ENCODE measurements at regions of chr1 and their contacts with region 1.

Region 1: GRCh38 chr1:7983086-7983778 is 21.7 kb downstream of the PARK7 start:
- DNase-seq: no peak
- ATAC-seq: no peak
- H3K4me3 ChIP-seq: no peak overlapping the region
- H3K27ac ChIP-seq: no peak overlapping the region
- H3K4me1 ChIP-seq: peaks cover 4% of the 10 kb centered on the region; the same call in 1 of the 2 replicates
- H3K27me3 ChIP-seq: no peaks in the 10 kb centered on the region
- CTCF ChIP-seq: no peak
- EP300 ChIP-seq: no peak
- POLR2A ChIP-seq: no peak
- RAD21 ChIP-seq: no peak

Region 2: GRCh38 chr1:7993593-7994479 is 10.6 kb after region 1 on chr1:
- CTCF ChIA-PET with region 1: interaction called, 12 read pairs
- POLR2A ChIA-PET with region 1: no interaction called
- RAD21 ChIA-PET with region 1: interaction called, 5 read pairs
- SMC1A ChIA-PET with region 1: interaction called, 4 read pairs
- in situ Hi-C with region 1: no loop called
- intact Hi-C with region 1: no loop called
- DNase-seq: peak; percentile 94
- ATAC-seq: peak; percentile 97
- H3K4me3 ChIP-seq: peak overlapping the region; percentile 30; the same call in 1 of the 2 replicates
- H3K27ac ChIP-seq: peak overlapping the region; percentile 87
- H3K4me1 ChIP-seq: peaks cover 19% of the 10 kb centered on the region
- H3K27me3 ChIP-seq: no peaks in the 10 kb centered on the region
- CTCF ChIP-seq: no peak
- EP300 ChIP-seq: peak in 1 of 2 experiments; percentile 81; a peak in 1 of 4 replicates
- POLR2A ChIP-seq: no peak
- RAD21 ChIP-seq: no peak

Region 3: GRCh38 chr1:8061210-8061609 is 78.0 kb after region 1 on chr1:
- CTCF ChIA-PET with region 1: no interaction called
- POLR2A ChIA-PET with region 1: no interaction called
- RAD21 ChIA-PET with region 1: no interaction called
- SMC1A ChIA-PET with region 1: no interaction called
- in situ Hi-C with region 1: no loop called
- intact Hi-C with region 1: no loop called
- DNase-seq: no peak
- ATAC-seq: no peak
- H3K4me3 ChIP-seq: no peak overlapping the region
- H3K27ac ChIP-seq: no peak overlapping the region
- H3K4me1 ChIP-seq: no peaks in the 10 kb centered on the region
- H3K27me3 ChIP-seq: no peaks in the 10 kb centered on the region
- CTCF ChIP-seq: no peak
- EP300 ChIP-seq: no peak
- POLR2A ChIP-seq: no peak
- RAD21 ChIP-seq: no peak

Measured in GM12878 (cell line).